CD4-positive, alpha-beta T cell (primary cell): ENCODE measurements at regions of chr17 and their contacts with region 1.

Region 1: DNA sequence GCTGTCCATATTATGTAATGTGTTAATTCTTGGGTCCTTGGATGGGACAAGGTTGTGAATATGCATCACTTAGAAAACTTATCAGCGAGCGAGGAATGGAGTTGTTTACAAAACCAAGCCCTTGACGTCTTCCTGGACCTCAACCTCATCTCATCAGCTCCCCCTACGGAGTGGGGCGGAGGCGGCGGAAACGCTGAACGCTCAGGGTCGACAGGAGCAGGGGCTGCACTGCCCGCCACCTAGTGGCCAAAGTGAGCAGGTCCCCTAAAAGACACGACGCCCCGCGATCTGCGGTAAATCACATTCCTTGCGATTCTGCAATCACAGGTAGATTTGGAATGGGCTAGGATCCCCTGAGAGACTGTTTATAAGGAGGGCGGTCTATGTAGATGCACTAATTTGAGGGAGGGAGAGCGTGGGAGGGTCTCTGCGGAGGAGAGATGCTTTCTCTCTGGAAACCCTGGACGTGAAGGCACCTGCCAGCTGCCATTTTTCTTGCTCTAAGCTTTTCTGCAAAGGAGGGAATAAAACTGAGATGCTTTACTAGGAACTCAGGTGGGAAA is 5.4 kb upstream of the ICAM2 start:
- DNase-seq: peak; percentile 89 to 98 (median 93)
- ATAC-seq: peak; percentile 84
- H3K4me3 ChIP-seq: peak overlapping the region; percentile 46
- H3K4me3 Mint-ChIP-seq: peak overlapping the region; percentile 68
- H3K27ac ChIP-seq: peak overlapping the region; percentile 74 to 91
- H3K27ac Mint-ChIP-seq: peak overlapping the region; percentile 100
- H3K4me1 ChIP-seq: peaks cover 78% of the 10 kb centered on the region
- H3K4me1 Mint-ChIP-seq: peaks cover 59% of the 10 kb centered on the region
- H3K27me3 ChIP-seq: no peaks in the 10 kb centered on the region
- H3K27me3 Mint-ChIP-seq: no peaks in the 10 kb centered on the region
- CTCF ChIP-seq: peak; percentile 99

Region 2: DNA sequence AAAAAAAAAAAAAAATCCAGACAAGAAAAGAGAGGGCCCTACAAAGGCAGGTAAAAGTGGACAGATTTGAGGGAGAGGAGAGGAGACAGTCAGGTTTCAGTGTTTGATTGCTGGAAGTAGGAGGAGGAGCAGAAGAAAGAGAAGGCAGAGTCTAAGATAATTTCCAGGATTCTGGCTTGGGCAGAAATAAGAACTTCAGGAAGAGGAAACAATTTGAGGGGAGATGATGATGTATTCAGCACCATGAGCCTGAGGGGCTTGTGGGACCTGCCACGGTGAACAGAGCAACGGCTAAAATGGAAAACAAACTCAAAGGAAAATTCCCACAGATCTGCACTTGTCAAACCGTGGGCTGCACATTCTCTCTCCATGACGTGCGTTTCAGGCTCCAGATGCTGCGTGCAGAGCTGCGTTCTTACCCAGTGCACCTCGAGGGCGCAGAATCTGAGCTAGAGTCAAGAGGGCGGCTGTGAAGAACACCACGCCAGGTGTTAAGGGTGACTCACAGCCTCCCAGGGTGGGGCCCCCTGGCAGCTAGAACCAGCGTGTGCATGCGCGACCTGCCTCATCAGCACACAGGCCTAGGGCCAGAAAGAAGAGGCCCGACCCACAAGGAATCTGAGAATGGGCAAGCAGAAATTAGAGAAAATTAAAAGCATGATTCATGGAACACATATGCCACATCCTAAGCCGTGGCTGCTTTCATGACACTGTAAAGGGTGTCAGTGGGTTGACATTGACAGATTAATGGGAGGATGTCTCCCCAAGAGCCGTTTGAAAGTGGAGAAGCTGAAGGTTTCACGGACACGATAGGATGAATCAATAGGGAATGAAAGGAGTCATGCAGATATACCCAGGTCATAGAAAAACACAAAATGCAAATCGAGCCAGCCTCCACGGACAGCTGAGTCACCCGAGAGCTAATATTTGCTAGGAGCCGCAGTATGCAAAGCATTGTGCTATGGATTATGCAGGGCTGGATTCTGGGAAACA is 1246.8 kb before region 1 on chr17:
- CTCF ChIA-PET with region 1: no interaction called
- POLR2A ChIA-PET with region 1: no interaction called
- intact Hi-C with region 1: no loop called
- DNase-seq: no peak
- ATAC-seq: no peak
- H3K4me3 ChIP-seq: no peak overlapping the region
- H3K4me3 Mint-ChIP-seq: no peak overlapping the region
- H3K27ac ChIP-seq: no peak overlapping the region
- H3K27ac Mint-ChIP-seq: no peak overlapping the region
- H3K4me1 ChIP-seq: no peaks in the 10 kb centered on the region
- H3K4me1 Mint-ChIP-seq: no peaks in the 10 kb centered on the region
- H3K27me3 ChIP-seq: peaks cover 0 to 4% of the 10 kb centered on the region in 2 experiments
- H3K27me3 Mint-ChIP-seq: peaks cover 3% of the 10 kb centered on the region
- CTCF ChIP-seq: no peak

Region 3: DNA sequence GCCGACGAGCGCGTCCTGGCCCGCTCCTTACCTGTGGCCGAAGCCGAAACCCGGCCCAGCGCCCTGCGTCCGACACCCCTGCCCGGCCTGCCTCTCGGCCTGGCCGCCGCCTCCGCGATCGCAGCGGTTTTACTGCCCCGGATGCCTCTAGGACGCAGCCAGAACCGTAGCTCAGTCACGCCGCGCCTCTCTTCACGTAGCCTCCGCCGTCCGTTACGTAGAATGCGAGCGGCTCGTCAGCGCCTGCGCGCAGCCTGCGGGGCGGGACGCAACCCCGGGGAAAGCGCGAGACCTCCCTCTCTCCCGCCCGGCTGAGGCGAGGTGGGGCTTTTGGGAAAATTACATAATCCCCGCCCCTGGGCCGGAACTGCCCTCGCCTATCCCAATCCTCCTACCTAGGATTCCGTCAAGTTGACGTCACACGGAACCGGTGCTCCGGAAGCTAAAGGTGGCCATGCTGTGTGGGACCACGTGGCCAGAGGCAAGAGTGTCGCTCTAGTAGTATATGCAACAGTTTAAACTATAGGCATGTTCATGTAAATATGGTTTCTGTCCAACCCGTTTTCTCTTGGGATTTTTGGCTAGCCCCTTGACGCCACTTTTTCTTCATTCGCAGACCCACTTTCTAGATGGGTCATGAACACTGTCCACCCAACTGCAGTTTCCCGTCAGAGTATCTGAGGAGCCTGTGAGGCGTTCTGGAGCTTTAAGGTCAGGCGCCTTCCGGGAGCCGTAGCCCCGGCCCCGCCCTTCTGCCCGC is 252.3 kb before region 1 on chr17 and contains the start of gene CCDC47:
- CTCF ChIA-PET with region 1: no interaction called
- POLR2A ChIA-PET with region 1: interaction called, 6 read pairs
- intact Hi-C with region 1: loop called in 1 of 2 experiments (anchors 10 kb)
- DNase-seq: peak; percentile 94 to 100 (median 98)
- ATAC-seq: peak; percentile 80
- H3K4me3 ChIP-seq: peak within 1 kb of the TSS; percentile 67
- H3K4me3 Mint-ChIP-seq: peak within 1 kb of the TSS; percentile 99
- H3K27ac ChIP-seq: peak within 1 kb of the TSS; percentile 94 to 98
- H3K27ac Mint-ChIP-seq: peak within 1 kb of the TSS; percentile 97
- H3K4me1 ChIP-seq: peaks cover 58% of the 10 kb centered on the region
- H3K4me1 Mint-ChIP-seq: peaks cover 71% of the 10 kb centered on the region
- H3K27me3 ChIP-seq: no peaks in the 10 kb centered on the region
- H3K27me3 Mint-ChIP-seq: no peaks in the 10 kb centered on the region
- CTCF ChIP-seq: no peak
- total RNA-seq, gene CCDC47: 31.0 to 31.3 TPM

Region 4: DNA sequence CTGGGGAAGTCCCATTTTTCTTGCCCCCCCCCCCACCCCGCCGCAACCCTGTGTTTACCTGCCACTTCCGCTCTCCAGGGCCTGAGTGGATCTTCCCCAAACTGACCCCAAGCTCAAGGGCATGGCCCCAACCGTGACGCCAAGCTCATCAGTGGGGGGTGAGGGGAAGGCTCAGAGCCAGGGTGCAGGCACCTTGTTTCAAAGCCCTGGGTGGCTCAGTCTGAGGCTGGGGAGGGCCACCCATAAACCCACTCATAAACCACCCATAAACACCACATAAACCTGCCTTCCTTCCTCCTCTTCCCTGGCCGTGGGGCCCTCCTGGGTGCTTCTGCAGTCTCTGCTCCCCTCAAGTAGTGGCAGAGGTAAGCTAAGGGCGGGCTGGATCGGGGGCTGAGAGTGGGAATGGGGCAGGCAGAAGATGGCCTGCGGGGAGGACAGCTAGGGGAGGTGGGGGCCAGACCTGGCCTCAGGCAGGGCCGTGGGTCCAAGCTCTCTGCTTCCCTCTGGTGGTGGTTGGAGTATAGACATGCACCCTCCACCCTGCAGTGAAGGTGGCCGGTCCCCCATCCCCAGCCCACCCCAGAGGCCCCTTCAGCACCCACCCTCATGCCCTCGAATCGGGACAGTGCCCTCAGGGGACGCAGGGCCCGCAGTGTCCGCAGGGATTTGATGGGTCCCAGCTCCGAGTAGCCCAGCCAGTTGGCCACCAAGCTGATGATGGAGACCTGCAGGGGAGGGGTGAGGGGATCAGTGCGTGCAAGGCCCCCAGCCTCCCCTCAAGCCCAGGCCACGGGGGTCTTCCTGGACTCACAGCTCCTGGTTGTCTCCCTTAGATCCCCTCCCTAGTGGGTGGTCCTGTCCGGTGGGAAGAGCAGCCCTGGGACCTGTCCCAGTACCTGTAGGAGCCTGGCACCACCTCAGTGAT is 79.1 kb before region 1 on chr17:
- CTCF ChIA-PET with region 1: interaction called, 23 read pairs
- POLR2A ChIA-PET with region 1: interaction called, 18 read pairs
- intact Hi-C with region 1: loop called in 1 of 2 experiments (anchors 5 kb)
- DNase-seq: peak; percentile 29 to 81 (median 40)
- ATAC-seq: peak; percentile 80
- H3K4me3 ChIP-seq: peak overlapping the region; percentile 39
- H3K4me3 Mint-ChIP-seq: peak overlapping the region; percentile 58
- H3K27ac ChIP-seq: no peak overlapping the region
- H3K27ac Mint-ChIP-seq: no peak overlapping the region
- H3K4me1 ChIP-seq: peaks cover 25% of the 10 kb centered on the region
- H3K4me1 Mint-ChIP-seq: peaks cover 29% of the 10 kb centered on the region
- H3K27me3 ChIP-seq: no peaks in the 10 kb centered on the region
- H3K27me3 Mint-ChIP-seq: no peaks in the 10 kb centered on the region
- CTCF ChIP-seq: peak; percentile 87

Region 5: GRCh38 chr17:63998050-63998720 is 27.6 kb before region 1 on chr17 and contains the start of gene PRR29:
- CTCF ChIA-PET with region 1: interaction called, 111 read pairs
- POLR2A ChIA-PET with region 1: interaction called, 156 read pairs
- intact Hi-C with region 1: loop called (anchors 1 to 2 kb)
- DNase-seq: peak; percentile 56 to 90 (median 70)
- ATAC-seq: peak; percentile 70
- H3K4me3 ChIP-seq: peak within 1 kb of the TSS; percentile 80
- H3K4me3 Mint-ChIP-seq: peak within 1 kb of the TSS; percentile 91
- H3K27ac ChIP-seq: no peak within 1 kb of the TSS
- H3K27ac Mint-ChIP-seq: peak within 1 kb of the TSS; percentile 73
- H3K4me1 ChIP-seq: peaks cover 45% of the 10 kb centered on the region
- H3K4me1 Mint-ChIP-seq: peaks cover 58% of the 10 kb centered on the region
- H3K27me3 ChIP-seq: no peaks in the 10 kb centered on the region
- H3K27me3 Mint-ChIP-seq: no peaks in the 10 kb centered on the region
- CTCF ChIP-seq: no peak
- total RNA-seq, gene PRR29: 0.56 to 0.71 TPM

Region 6: GRCh38 chr17:64041912-64042311 is 16.1 kb after region 1 on chr17:
- CTCF ChIA-PET with region 1: interaction called, 11 read pairs
- POLR2A ChIA-PET with region 1: interaction called, 12 read pairs
- intact Hi-C with region 1: loop called in 1 of 2 experiments (anchors 2 kb)
- DNase-seq: peak in 1 of 14 experiments; percentile 53
- ATAC-seq: peak; percentile 48
- H3K4me3 ChIP-seq: no peak overlapping the region
- H3K4me3 Mint-ChIP-seq: no peak overlapping the region
- H3K27ac ChIP-seq: no peak overlapping the region
- H3K27ac Mint-ChIP-seq: peak overlapping the region; percentile 72
- H3K4me1 ChIP-seq: peaks cover 25% of the 10 kb centered on the region
- H3K4me1 Mint-ChIP-seq: peaks cover 11% of the 10 kb centered on the region
- H3K27me3 ChIP-seq: no peaks in the 10 kb centered on the region
- H3K27me3 Mint-ChIP-seq: no peaks in the 10 kb centered on the region
- CTCF ChIP-seq: no peak

Region 7: DNA sequence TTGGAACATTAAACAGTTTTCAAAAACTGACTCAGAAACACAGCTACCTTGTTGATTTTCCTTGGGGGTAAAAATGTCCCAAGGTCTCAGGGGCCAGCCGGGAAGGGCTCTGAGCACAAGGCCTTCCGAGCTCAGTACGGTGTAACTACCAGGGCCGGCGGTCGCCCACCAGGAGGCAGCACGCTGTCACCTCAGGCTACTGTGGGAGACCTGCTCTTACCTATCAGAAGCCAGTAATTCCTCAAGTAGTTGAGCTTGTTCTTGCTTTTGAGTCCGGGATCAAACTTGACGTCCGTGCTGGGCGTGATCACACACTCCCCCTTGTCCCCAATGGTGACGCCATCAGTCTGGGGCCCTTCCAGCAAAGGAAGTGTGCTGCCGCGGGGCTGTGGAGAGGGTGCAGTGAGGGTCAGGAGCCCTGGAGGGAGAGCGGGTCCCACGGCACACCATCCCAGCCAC is 38.0 kb after region 1 on chr17:
- CTCF ChIA-PET with region 1: interaction called, 7 read pairs
- POLR2A ChIA-PET with region 1: interaction called, 5 read pairs
- intact Hi-C with region 1: loop called (anchors 5 kb)
- DNase-seq: peak; percentile 36 to 81 (median 58)
- ATAC-seq: peak; percentile 53
- H3K4me3 ChIP-seq: peak overlapping the region; percentile 47
- H3K4me3 Mint-ChIP-seq: peak overlapping the region; percentile 82
- H3K27ac ChIP-seq: no peak overlapping the region
- H3K27ac Mint-ChIP-seq: peak overlapping the region; percentile 80
- H3K4me1 ChIP-seq: peaks cover 91% of the 10 kb centered on the region
- H3K4me1 Mint-ChIP-seq: peaks cover 85% of the 10 kb centered on the region
- H3K27me3 ChIP-seq: no peaks in the 10 kb centered on the region
- H3K27me3 Mint-ChIP-seq: no peaks in the 10 kb centered on the region
- CTCF ChIP-seq: peak; percentile 60

Region 8: DNA sequence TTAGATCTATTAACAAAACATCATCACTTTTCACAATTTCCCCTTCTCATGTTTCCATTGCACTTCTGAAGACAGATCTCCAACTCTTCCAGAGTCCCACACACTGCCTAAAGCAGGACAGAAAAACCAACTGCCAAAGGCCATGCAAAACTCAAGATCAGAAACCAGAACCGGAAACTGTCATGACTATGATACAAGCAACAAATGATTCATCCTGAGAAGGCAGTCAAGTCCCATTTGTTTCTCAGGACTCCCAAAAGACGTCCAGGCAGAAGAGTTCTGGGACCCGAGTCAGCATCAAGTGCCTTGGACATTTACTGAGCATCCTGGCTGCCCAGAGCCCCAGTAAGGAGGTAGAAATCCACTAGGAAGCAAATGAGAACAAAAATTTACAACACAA is 65.3 kb after region 1 on chr17:
- CTCF ChIA-PET with region 1: no interaction called
- POLR2A ChIA-PET with region 1: no interaction called
- intact Hi-C with region 1: no loop called
- DNase-seq: peak in 3 of 14 experiments; percentile 44 to 48 (median 47)
- ATAC-seq: peak; percentile 70
- H3K4me3 ChIP-seq: no peak overlapping the region
- H3K4me3 Mint-ChIP-seq: peak overlapping the region; percentile 44
- H3K27ac ChIP-seq: peak overlapping the region in 1 of 2 donors; percentile 59
- H3K27ac Mint-ChIP-seq: peak overlapping the region; percentile 77
- H3K4me1 ChIP-seq: peaks cover 69% of the 10 kb centered on the region
- H3K4me1 Mint-ChIP-seq: peaks cover 86% of the 10 kb centered on the region
- H3K27me3 ChIP-seq: no peaks in the 10 kb centered on the region
- H3K27me3 Mint-ChIP-seq: no peaks in the 10 kb centered on the region
- CTCF ChIP-seq: no peak

Region 9: DNA sequence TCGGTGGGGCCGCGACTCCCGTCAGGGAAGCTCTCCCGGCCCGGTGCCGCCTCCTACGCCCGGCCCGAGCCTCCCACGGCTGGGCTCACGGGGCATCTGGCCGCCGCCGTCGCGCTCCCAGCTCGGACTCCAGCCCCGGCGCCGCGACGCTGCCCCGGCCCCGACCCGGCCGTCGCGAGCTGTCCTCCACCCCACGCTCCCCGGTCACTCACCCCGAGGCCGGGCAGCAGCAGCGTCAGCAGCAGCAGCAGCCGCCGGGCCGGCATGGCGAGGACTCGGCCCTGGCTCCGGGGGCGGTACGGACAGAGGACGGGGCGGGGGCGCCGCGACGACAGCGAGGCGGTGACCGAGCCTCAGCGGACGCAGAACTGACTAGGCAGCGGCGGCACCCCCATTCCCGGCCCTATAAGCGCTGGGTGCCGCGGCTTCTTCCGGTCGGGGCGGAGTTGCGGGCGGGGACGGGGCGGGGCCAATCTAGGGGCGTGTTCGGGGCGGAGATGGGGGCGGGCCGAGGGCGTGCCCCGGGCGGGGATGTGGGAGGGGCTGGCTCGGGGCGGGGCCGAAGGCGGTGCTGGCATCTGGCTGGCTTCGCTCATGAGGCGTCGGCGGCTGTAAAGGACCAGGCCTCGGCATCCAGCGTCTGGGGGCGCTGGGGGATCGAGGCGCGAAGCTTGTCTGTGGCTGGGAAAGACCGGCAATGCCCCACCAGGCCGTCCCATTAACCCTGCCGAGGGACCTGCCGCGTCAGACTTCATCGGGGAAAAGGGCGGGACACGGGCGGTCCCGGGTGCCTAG is 104.1 kb after region 1 on chr17 and contains the start of gene ERN1:
- CTCF ChIA-PET with region 1: interaction called, 170 read pairs
- POLR2A ChIA-PET with region 1: interaction called, 84 read pairs
- intact Hi-C with region 1: loop called (anchors 1 kb)
- DNase-seq: peak; percentile 85 to 95 (median 91)
- ATAC-seq: peak; percentile 86
- H3K4me3 ChIP-seq: peak within 1 kb of the TSS; percentile 89
- H3K4me3 Mint-ChIP-seq: peak within 1 kb of the TSS; percentile 99
- H3K27ac ChIP-seq: peak within 1 kb of the TSS; percentile 88 to 96
- H3K27ac Mint-ChIP-seq: peak within 1 kb of the TSS; percentile 92
- H3K4me1 ChIP-seq: peaks cover 36% of the 10 kb centered on the region
- H3K4me1 Mint-ChIP-seq: peaks cover 57% of the 10 kb centered on the region
- H3K27me3 ChIP-seq: no peaks in the 10 kb centered on the region
- H3K27me3 Mint-ChIP-seq: no peaks in the 10 kb centered on the region
- CTCF ChIP-seq: no peak
- total RNA-seq, gene ERN1: 62.7 to 67.8 TPM